Dendritic cell treated with granulocyte-macrophage colony-stimulating factor and Interleukin-4, amounts not matched to agents 40 ng/mL and 50 ng/mL, for 4 days (primary cell): ENCODE measurements at regions of chr7 and their contacts with region 1.

Region 1: GRCh38 chr7:115980159-115980558 is 50.4 kb downstream of the TFEC start:
- H3K4me3 Mint-ChIP-seq: no peak overlapping the region
- H3K27ac Mint-ChIP-seq: no peak overlapping the region
- H3K4me1 Mint-ChIP-seq: peaks cover 35% of the 10 kb centered on the region
- H3K27me3 Mint-ChIP-seq: no peaks in the 10 kb centered on the region

Region 2: DNA sequence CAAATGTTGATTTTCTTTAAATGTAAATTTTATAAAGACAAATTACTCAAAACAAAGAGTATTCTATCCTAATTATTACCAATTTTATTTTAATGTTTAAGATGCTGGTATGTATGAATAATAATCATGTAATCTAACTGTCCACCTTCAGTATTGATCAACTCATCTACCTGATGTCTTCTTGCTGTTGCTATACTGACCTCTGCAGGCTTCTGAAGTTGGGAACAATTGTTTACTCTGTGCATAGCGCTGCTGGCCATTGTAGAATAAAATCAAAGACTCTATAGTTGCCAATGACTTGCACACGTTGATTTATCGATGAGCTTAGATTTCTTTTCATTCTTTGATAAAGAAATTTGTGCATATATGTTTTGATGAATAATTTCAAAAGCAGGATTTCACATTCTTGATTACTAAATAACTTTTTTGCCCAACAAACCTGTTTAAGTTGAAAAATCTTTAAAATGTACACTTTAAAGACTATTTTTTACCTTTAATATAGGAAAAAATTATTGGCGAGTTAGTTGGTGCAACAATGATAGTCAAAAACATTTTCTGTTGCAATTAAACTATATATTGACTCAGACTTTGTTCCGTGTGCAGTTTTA is 231.9 kb before region 1 on chr7:
- intact Hi-C with region 1: no loop called
- H3K4me3 Mint-ChIP-seq: no peak overlapping the region
- H3K27ac Mint-ChIP-seq: no peak overlapping the region
- H3K4me1 Mint-ChIP-seq: no peaks in the 10 kb centered on the region
- H3K27me3 Mint-ChIP-seq: no peaks in the 10 kb centered on the region

Region 3: DNA sequence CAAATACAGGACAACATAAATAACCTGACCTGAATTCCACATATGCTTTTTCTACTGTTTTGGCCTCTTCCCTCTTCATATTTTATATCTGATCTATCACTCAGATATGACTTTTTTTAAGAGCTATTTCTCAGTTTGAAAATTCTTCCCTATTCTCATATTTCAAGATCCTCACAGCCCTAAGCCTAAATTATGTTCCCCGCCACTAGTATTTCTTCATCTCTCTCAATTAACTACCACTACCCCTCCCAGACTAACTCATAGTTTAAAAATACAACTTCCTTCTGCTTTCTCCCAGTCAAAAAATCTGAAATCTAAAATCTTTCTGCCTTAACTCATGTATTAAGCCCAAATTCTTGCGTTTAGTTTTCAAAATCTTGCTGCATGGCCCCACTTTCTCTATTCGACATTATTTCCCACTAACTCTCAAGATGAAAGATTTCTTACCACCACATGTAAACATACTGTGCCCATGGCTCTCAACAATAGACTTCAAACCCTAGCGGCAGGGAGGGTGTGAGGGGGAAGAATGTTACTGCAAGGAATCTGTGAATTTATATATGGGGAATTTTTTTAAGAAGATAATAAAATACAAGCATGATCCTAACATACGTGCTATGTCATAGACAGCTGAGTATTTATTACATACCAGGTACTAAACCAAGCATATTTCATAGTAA is 14.2 kb before region 1 on chr7:
- intact Hi-C with region 1: loop called (anchors 2 kb)
- H3K4me3 Mint-ChIP-seq: no peak overlapping the region
- H3K27ac Mint-ChIP-seq: peak overlapping the region; percentile 33
- H3K4me1 Mint-ChIP-seq: peaks cover 42% of the 10 kb centered on the region
- H3K27me3 Mint-ChIP-seq: no peaks in the 10 kb centered on the region